Prostate gland (tissue), 2 donors: ENCODE measurements at regions of chr10 and their contacts with region 1.

Region 1: GRCh38 chr10:96129387-96130325 is at the start of gene ZNF518A:
- DNase-seq: peak; percentile 90
- H3K4me3 ChIP-seq: peak within 1 kb of the TSS; percentile 60 to 66
- H3K27ac ChIP-seq: peak within 1 kb of the TSS; percentile 94 to 95
- H3K4me1 ChIP-seq: no peaks in the 10 kb centered on the region
- H3K27me3 ChIP-seq: no peaks in the 10 kb centered on the region
- CTCF ChIP-seq: no peak
- POLR2A ChIP-seq: no peak
- total RNA-seq, gene ZNF518A: 23.0 to 42.4 TPM

Region 2: GRCh38 chr10:96073722-96074121 is 55.9 kb before region 1 on chr10:
- intact Hi-C with region 1: no loop called
- DNase-seq: no peak
- H3K4me3 ChIP-seq: no peak overlapping the region
- H3K27ac ChIP-seq: no peak overlapping the region
- H3K4me1 ChIP-seq: no peaks in the 10 kb centered on the region
- H3K27me3 ChIP-seq: no peaks in the 10 kb centered on the region
- CTCF ChIP-seq: no peak
- POLR2A ChIP-seq: no peak

Region 3: DNA sequence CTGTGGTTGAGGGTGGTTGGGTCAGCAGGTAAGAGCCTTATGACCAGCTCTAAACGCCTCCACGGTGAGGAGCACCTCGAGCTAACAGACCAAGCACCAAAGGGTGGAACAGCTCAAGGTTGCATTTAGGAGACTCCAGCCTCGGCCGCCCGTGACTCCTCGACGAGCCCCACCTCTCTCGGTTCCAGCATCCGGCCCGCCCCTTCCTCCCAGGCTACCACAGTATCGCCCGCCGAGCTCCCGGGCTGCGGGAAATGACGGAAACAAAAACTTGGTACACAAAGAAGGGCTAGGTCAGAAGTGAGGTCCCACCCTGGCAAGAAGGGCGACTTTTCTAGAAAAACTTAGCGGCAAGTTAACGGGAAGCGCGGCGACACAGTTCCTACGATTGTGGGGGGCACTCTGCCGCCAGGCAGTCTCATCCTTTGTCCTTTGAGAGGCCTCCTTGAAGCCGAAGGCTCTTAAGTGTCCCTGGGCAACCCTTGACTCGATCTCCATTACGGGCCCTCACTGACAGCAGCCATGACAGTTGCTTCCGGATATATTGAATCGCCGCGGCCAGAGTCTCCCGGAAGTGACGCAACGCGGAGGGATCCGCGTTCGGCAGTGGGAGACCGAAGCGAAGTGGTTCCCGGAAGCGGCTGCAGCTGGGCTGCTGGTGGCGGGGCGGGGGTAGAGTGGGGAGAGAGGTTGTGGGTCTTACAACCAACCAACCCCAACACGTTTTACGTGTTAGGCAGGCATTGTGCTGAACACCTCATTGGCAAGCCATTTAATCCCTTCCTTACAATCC is 39.8 kb before region 1 on chr10:
- intact Hi-C with region 1: loop called (anchors 1 kb)
- DNase-seq: peak; percentile 80
- H3K4me3 ChIP-seq: peak overlapping the region; percentile 67 to 69
- H3K27ac ChIP-seq: peak overlapping the region; percentile 86 to 92
- H3K4me1 ChIP-seq: no peaks in the 10 kb centered on the region
- H3K27me3 ChIP-seq: peaks cover 3% of the 10 kb centered on the region
- CTCF ChIP-seq: no peak
- POLR2A ChIP-seq: no peak

Region 4: DNA sequence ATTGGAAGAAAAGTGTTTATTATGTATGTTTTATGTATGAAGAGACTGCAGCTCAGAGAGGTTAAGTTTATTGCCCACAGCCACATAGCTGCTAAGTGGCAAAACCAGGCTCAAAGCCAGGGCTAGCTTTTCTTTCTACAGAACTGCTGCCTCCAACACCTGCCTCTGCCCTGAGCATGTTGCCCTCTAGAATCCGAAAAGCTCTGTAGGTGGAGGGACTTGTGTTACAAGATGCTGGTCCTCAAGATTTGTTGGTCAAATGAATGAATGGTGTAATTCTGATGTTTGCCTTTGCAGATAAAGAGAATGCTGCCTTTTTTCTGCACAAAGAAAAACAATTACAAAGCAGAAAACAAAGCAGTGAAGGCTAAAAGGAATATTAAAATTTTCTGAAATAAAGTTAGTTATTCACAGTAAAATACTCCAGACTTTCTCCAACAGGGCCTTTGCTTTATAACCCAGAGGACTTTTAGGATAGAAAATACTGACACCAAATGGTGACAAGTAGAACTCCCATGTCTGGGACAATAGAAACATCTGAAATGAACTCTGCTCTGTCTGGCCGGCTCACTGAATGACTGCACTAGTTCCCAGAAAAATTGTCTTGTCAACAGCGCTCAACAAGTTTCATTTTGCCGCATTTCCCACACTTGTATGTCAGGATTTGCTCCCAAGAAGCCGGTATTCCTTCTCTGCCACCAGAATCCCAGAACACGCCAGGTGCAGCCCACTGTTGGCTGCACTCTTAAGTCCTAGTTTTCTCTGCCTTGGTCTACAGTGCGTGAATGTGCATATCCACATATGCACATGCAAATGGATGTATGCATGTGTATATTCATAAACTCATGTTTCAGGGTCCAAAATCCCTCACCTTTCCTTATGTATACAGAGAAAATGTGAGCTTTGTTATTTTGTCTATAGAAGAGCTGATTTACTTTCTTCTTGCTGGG is 163.6 kb after region 1 on chr10:
- intact Hi-C with region 1: no loop called
- DNase-seq: peak; percentile 15
- H3K4me3 ChIP-seq: no peak overlapping the region
- H3K27ac ChIP-seq: no peak overlapping the region
- H3K4me1 ChIP-seq: no peaks in the 10 kb centered on the region
- H3K27me3 ChIP-seq: no peaks in the 10 kb centered on the region
- CTCF ChIP-seq: peak in 3 of 4 experiments; percentile 40 to 78 (median 78)
- POLR2A ChIP-seq: no peak

Region 5: DNA sequence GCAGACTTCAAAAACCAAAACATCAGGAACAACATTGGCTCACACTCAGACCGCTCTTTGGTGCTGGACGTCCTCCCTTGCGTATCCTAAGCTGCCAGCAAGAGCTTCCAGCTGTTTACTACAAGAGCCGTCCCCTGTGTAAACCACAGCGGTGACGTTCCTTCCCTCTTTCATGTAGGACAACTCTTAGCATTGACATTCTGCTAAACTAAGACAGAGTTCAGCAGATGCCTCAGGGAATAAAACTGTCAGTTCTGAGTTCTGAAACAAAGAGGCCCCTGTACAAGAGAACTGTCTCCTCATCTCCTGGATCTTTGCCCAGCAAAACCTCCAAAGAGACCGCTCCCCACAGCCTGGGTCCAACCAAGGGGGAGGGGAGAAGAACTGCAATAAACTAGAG is 287.0 kb after region 1 on chr10:
- intact Hi-C with region 1: no loop called
- DNase-seq: peak; percentile 29
- H3K4me3 ChIP-seq: no peak overlapping the region
- H3K27ac ChIP-seq: no peak overlapping the region
- H3K4me1 ChIP-seq: no peaks in the 10 kb centered on the region
- H3K27me3 ChIP-seq: no peaks in the 10 kb centered on the region
- CTCF ChIP-seq: no peak
- POLR2A ChIP-seq: no peak